Breast epithelium (tissue), 4 donors: ENCODE measurements at regions of chr11 and their contacts with region 1.

Region 1: DNA sequence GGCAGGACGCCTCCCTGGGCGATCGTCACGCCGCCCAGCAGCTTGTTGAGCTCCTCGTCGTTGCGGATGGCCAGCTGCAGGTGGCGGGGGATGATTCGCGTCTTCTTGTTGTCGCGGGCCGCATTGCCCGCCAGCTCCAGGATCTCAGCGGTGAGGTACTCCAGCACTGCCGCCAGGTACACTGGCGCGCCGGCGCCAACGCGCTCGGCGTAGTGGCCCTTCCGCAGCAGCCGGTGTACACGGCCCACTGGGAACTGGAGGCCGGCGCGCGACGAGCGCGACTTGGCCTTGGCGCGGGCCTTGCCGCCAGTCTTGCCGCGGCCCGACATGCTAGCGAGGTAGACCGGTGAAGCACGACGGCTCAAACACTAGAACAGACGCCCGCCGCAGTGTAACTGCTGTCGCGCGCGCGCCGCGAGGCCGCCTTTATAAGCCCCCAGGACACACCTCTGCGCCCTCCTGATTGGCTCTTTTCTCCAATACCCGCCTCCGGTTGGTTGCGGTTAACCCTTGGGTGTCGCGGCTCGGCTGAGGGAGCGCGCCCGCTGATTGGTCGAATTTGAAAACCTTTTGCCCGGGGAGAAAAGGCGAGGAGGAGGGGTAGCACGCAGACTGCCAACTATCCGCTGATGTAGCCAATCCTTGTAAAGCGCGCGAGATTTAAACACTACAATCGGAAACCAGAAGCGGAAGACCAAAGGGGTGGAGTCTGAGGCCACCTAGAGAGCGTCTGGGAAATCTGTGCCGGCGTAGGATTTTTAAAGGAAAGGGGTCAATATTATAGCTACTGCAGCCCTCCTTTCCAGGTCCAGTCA is 6.4 kb downstream of the DPAGT1 start:
- DNase-seq: peak; percentile 99 to 100
- H3K4me3 ChIP-seq: peak overlapping the region; percentile 62 to 93 (median 71)
- H3K27ac ChIP-seq: peak overlapping the region; percentile 92 to 97
- H3K4me1 ChIP-seq: peaks cover 6 to 9% of the 10 kb centered on the region in 2 donors
- H3K27me3 ChIP-seq: no peaks in the 10 kb centered on the region
- CTCF ChIP-seq: peak in 2 of 3 donors; percentile 42 to 58
- POLR2A ChIP-seq: peak; percentile 96

Region 2: GRCh38 chr11:119084663-119085436 is 10.4 kb before region 1 on chr11 and contains the start of gene HMBS:
- intact Hi-C with region 1: loop called (anchors 1 kb)
- DNase-seq: peak; percentile 92 to 93
- H3K4me3 ChIP-seq: peak within 1 kb of the TSS; percentile 58 to 94 (median 84)
- H3K27ac ChIP-seq: peak within 1 kb of the TSS; percentile 83 to 95
- H3K4me1 ChIP-seq: peaks cover 4 to 7% of the 10 kb centered on the region in 2 donors
- H3K27me3 ChIP-seq: no peaks in the 10 kb centered on the region
- CTCF ChIP-seq: no peak
- POLR2A ChIP-seq: no peak
- total RNA-seq, gene HMBS: 5.6 to 21.6 (median 8.9) TPM

Region 3: DNA sequence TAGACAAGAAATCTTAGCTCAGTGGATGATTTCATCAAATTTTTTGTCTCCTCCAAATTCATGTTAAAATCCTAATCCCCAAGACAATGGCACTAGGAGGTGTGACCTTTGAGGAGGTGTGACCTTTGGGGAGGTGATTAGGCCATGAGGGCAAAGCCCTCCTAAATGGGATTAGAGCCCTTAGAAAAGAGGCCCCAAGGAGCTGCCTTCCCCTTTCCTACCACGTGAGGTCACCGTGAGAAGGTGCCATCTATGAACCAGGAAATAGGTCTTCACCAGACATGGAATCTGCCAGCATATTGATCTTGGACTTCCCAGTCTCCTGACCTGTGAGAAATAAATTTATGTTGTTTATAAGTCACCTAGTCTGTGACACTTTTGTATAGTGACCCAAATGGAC is 903.9 kb after region 1 on chr11:
- intact Hi-C with region 1: no loop called
- DNase-seq: no peak
- H3K4me3 ChIP-seq: no peak overlapping the region
- H3K27ac ChIP-seq: no peak overlapping the region
- H3K4me1 ChIP-seq: peaks cover 0 to 4% of the 10 kb centered on the region in 2 donors
- H3K27me3 ChIP-seq: no peaks in the 10 kb centered on the region
- CTCF ChIP-seq: no peak
- POLR2A ChIP-seq: no peak